Endothelial cell of umbilical vein (primary cell): ENCODE measurements at regions of chr2 and their contacts with region 1.

Region 1: DNA sequence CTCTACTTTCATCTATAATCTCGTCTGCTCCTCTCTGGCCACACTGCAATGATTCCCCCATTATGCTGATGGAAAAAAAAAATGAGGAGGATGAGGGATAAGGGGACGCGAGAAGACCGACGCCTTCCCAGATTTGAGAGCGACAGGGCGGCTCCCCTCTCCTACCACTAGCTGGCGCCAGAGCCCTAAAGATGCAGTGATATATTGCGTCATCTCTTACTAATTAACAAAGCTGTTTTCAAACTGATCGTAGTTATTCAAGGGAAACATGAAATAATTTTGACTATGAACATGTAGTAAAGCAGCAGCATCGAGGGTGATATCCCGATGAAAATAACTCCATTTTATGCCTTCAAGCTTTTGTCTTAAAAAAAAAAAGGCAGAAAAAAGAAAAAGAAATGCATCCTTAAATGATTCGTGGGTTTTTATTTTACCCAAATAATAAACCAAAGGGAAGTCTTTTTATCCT is 48.0 kb upstream of the HNRNPA3 start:
- DNase-seq: peak; percentile 92
- H3K4me3 ChIP-seq: peak overlapping the region in 1 of 3 experiments; percentile 26
- H3K27ac ChIP-seq: peak overlapping the region; percentile 91
- H3K4me1 ChIP-seq: peaks cover 51% of the 10 kb centered on the region
- H3K27me3 ChIP-seq: no peaks in the 10 kb centered on the region
- CTCF ChIP-seq: peak; percentile 99 to 100
- POLR2A ChIP-seq: no peak

Region 2: GRCh38 chr2:177201919-177202346 is 37.3 kb after region 1 on chr2:
- CTCF ChIA-PET with region 1: interaction called, 74 read pairs
- POLR2A ChIA-PET with region 1: no interaction called
- dilution Hi-C with region 1: no loop called
- intact Hi-C with region 1: no loop called
- DNase-seq: no peak
- H3K4me3 ChIP-seq: no peak overlapping the region
- H3K27ac ChIP-seq: no peak overlapping the region
- H3K4me1 ChIP-seq: no peaks in the 10 kb centered on the region
- H3K27me3 ChIP-seq: no peaks in the 10 kb centered on the region
- CTCF ChIP-seq: no peak
- POLR2A ChIP-seq: no peak

Region 3: GRCh38 chr2:177239932-177240630 is 75.5 kb after region 1 on chr2:
- CTCF ChIA-PET with region 1: interaction called, 36 read pairs
- POLR2A ChIA-PET with region 1: interaction called, 5 read pairs
- dilution Hi-C with region 1: no loop called
- intact Hi-C with region 1: loop called (anchors 1 kb)
- DNase-seq: peak; percentile 75
- H3K4me3 ChIP-seq: peak overlapping the region in 1 of 3 experiments; percentile 0
- H3K27ac ChIP-seq: peak overlapping the region; percentile 99
- H3K4me1 ChIP-seq: peaks cover 56% of the 10 kb centered on the region
- H3K27me3 ChIP-seq: no peaks in the 10 kb centered on the region
- CTCF ChIP-seq: no peak
- POLR2A ChIP-seq: no peak

Region 4: DNA sequence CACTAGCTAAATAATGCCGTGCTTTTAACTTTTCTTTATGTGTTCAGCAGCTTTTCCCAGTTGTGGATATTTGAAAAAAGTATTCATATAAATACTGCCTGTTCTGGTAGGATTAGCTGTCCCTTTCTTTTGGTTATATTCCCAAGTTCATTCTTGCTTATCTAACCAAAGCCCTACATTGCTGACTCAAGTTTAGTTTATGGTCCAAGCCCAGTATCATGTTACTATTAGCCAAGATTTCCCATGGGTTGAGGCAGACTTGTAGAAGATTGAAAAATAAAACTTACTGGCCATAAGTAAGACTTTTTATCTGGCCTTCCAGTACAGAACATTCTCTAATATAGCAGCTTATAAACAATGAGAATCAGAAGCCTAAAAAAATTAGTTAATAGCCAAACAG is 149.6 kb after region 1 on chr2:
- CTCF ChIA-PET with region 1: interaction called, 10 read pairs
- POLR2A ChIA-PET with region 1: no interaction called
- dilution Hi-C with region 1: no loop called
- intact Hi-C with region 1: no loop called
- DNase-seq: no peak
- H3K4me3 ChIP-seq: no peak overlapping the region
- H3K27ac ChIP-seq: no peak overlapping the region
- H3K4me1 ChIP-seq: no peaks in the 10 kb centered on the region
- H3K27me3 ChIP-seq: no peaks in the 10 kb centered on the region
- CTCF ChIP-seq: no peak
- POLR2A ChIP-seq: no peak

Region 5: DNA sequence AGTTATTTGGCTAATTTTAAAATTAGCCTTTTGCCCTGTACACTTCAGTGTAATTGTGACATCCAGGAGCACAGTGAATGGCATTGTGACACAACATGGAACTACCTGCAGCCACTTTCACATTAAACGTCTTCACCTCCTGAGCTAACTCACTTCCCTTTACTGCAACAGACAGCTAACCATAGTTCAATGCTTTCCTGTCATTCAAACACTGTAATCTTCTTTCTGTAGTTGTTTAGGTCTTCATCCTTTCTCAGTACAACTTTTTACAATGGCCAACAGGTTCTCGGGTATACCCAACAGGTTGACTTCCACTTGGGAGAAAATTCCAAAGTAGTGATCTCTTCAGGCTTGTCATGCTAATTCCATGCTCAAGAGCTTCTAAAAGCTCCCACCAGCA is 219.3 kb after region 1 on chr2:
- CTCF ChIA-PET with region 1: no interaction called
- POLR2A ChIA-PET with region 1: no interaction called
- dilution Hi-C with region 1: no loop called
- intact Hi-C with region 1: no loop called
- DNase-seq: no peak
- H3K4me3 ChIP-seq: no peak overlapping the region
- H3K27ac ChIP-seq: no peak overlapping the region
- H3K4me1 ChIP-seq: no peaks in the 10 kb centered on the region
- H3K27me3 ChIP-seq: no peaks in the 10 kb centered on the region
- CTCF ChIP-seq: no peak
- POLR2A ChIP-seq: no peak

Region 6: DNA sequence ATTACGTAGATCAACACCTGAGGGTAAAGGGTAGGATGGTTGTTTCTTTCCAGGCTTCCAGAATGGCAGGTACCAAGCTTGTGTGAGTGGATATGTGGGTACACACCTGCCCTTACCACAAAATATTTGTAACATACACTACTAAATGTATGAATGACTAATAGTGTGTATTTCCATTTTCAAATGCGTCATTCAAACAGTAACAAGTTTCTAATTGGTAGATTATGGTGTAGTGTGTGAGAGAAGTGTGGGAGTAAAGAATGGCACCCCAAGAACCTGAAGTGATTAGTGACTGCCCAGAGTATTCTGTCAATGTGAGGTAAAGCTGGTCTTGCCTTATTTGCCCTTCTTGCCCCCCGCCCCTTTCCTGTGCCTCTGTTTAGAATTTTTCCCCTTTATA is 249.1 kb after region 1 on chr2:
- CTCF ChIA-PET with region 1: interaction called, 78 read pairs
- POLR2A ChIA-PET with region 1: no interaction called
- dilution Hi-C with region 1: no loop called
- intact Hi-C with region 1: loop called (anchors 1 kb)
- DNase-seq: no peak
- H3K4me3 ChIP-seq: no peak overlapping the region
- H3K27ac ChIP-seq: no peak overlapping the region
- H3K4me1 ChIP-seq: peaks cover 13% of the 10 kb centered on the region
- H3K27me3 ChIP-seq: no peaks in the 10 kb centered on the region
- CTCF ChIP-seq: no peak
- POLR2A ChIP-seq: no peak

Region 7: GRCh38 chr2:177604271-177605065 is 439.9 kb after region 1 on chr2:
- CTCF ChIA-PET with region 1: interaction called, 15 read pairs
- POLR2A ChIA-PET with region 1: no interaction called
- dilution Hi-C with region 1: no loop called
- intact Hi-C with region 1: loop called (anchors 5 kb)
- DNase-seq: peak; percentile 71
- H3K4me3 ChIP-seq: no peak overlapping the region
- H3K27ac ChIP-seq: no peak overlapping the region
- H3K4me1 ChIP-seq: no peaks in the 10 kb centered on the region
- H3K27me3 ChIP-seq: no peaks in the 10 kb centered on the region
- CTCF ChIP-seq: peak; percentile 56 to 70
- POLR2A ChIP-seq: no peak

Region 8: GRCh38 chr2:177753682-177754491 is 589.3 kb after region 1 on chr2:
- CTCF ChIA-PET with region 1: interaction called, 51 read pairs
- POLR2A ChIA-PET with region 1: no interaction called
- dilution Hi-C with region 1: no loop called
- intact Hi-C with region 1: loop called (anchors 1 kb)
- DNase-seq: peak; percentile 34
- H3K4me3 ChIP-seq: no peak overlapping the region
- H3K27ac ChIP-seq: no peak overlapping the region
- H3K4me1 ChIP-seq: peaks cover 16% of the 10 kb centered on the region
- H3K27me3 ChIP-seq: no peaks in the 10 kb centered on the region
- CTCF ChIP-seq: no peak
- POLR2A ChIP-seq: no peak